ENCODE measurements at regions of chr4 and their contacts with region 1.

Region 1: DNA sequence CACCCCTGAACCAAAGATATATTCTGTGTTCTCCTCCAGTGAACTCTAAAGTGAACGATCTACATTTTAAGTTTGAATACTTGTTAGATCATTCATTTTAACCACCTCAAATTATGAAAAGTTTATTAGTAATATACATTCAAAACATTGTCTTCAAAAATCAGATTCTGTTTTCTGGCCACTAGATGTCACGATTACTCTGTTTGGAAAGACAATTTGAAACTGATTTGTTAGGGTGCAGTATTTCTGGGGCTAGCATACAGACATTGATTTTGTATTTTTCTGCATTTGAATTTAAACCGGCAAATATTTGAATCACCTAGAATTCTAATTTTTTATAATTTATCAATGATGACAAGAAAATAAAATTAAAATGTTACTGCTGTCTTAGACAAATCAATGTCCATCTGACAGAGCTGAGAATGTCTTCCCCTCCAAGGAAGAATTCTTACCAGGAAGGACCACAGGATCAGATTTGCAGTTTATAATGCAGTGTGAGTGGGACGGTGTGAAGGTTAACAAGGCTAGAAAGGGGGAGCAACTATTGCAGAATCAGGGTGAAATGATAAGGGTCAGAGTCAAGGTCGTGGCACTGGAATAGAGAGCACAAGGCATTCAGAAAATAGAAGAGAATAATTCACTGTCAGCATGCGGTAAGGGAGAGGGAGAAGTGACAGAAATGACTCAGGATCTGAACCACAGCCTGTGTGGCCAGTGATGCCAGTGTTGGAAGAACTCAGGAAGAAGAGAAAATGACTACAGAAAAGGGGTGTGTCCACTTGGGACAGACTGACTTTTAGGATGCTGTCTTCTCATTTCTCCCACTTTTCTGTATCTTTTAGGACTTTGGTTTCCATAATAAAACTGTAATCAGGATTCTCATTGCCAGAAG is 91.6 kb downstream of the ANXA10 start:
- DNase-seq: no peak
- H3K4me3 Mint-ChIP-seq: no peak overlapping the region
- H3K27ac Mint-ChIP-seq: no peak overlapping the region
- H3K4me1 Mint-ChIP-seq: peaks cover 5% of the 10 kb centered on the region
- H3K27me3 Mint-ChIP-seq: no peaks in the 10 kb centered on the region

Region 2: DNA sequence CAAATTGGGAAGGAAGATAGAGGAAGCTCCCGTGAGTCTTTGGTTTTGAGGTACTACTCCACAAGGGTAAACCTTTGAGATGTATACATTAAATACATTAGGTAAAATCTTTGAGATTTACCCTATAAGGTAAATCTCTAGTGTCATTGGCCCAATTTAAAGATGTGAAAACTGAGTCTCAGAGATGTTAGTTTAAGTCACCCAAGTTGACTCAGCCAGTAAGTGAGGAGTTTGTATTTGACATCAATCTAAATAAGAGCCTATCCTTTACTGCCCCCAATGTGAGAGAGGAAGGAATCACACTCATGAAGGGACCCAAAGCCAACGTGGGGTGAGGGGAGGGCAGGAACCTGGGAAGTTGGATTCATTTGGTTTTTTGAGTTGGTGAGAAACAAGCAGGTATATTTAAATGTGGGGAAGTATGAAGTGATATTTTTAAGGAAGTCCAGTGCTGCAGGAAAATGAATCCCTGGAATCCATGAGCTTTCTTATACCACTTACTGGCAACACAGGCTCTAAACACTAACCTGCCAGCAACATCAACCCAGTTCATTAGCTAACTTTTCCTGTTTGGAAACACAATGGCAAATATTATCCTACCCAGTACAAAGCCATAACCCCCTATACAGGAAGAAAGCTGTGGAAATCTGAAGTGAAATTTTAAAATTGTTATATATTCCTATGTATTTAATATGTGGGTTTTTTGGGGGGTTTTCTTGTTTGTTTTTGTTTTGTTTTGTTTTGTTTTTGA is 368.2 kb after region 1 on chr4:
- intact Hi-C with region 1: loop called (anchors 5 kb)
- DNase-seq: peak; percentile 63
- H3K4me3 Mint-ChIP-seq: no peak overlapping the region
- H3K27ac Mint-ChIP-seq: no peak overlapping the region
- H3K4me1 Mint-ChIP-seq: no peaks in the 10 kb centered on the region
- H3K27me3 Mint-ChIP-seq: peaks cover 13% of the 10 kb centered on the region

Measured in activated CD4-positive, alpha-beta T cell treated with anti-CD3 and anti-CD28 coated beads, Interleukin-2, amount 10 ng/mL, durations not matched to agents 24 days and 14 days (primary cell).